Stomach (tissue), 19 donors: ENCODE measurements at regions of chr1 and their contacts with region 1.

Region 1: GRCh38 chr1:109564194-109564878 is 15.9 kb downstream of the GNAI3 start:
- DNase-seq: no peak
- H3K4me3 ChIP-seq: no peak overlapping the region
- H3K27ac ChIP-seq: no peak overlapping the region
- H3K4me1 ChIP-seq: peaks cover 25 to 95% (median 68%) of the 10 kb centered on the region in 4 donors
- H3K27me3 ChIP-seq: no peaks in the 10 kb centered on the region
- CTCF ChIP-seq: no peak
- EP300 ChIP-seq: no peak
- POLR2A ChIP-seq: no peak

Region 2: GRCh38 chr1:109718491-109718890 is 154.2 kb after region 1 on chr1:
- intact Hi-C with region 1: no loop called
- DNase-seq: peak in 1 of 2 donors; percentile 54
- H3K4me3 ChIP-seq: no peak overlapping the region
- H3K27ac ChIP-seq: no peak overlapping the region
- H3K4me1 ChIP-seq: peaks cover 0 to 18% (median 10%) of the 10 kb centered on the region in 4 donors
- H3K27me3 ChIP-seq: no peaks in the 10 kb centered on the region
- CTCF ChIP-seq: peak in 4 of 7 experiments; percentile 8 to 39 (median 16)
- EP300 ChIP-seq: no peak
- POLR2A ChIP-seq: no peak

Region 3: DNA sequence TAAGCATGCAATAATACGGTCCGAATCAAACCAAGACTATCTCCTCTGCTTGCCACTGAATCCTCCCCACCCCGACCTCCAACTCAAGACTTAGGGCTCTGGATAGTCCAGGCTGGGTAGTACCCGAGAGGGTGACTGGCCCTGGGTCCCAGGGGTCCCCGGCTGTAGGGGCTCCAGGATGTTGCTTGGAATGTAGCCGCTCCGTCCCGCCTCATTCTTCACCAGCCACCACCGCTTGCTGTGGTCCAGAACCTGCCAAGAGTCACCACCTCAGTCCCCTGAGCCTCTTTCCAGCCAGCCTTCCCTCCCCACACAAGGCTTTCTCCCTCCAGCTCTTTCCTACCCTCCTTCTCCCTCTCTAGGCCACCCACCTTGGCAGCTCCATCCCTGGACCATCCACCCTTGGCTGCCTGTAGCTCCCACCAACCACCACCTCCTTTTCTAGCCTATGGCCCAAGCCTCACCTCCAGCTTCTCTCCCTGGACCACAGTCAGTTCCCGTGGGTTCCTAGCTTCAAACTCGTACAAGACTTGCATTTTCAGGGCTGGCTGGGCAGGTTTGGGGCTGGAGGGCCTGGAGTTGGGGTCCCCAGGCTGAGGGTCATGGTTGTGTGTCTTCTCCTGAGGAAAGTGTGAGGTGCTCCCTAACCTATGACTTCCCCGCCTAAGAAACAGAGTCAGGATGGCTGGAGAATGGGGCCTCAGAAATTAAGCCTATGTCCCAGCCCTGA is 187.4 kb after region 1 on chr1:
- intact Hi-C with region 1: loop called (anchors 5 kb)
- DNase-seq: no peak
- H3K4me3 ChIP-seq: no peak overlapping the region
- H3K27ac ChIP-seq: no peak overlapping the region
- H3K4me1 ChIP-seq: no peaks in the 10 kb centered on the region
- H3K27me3 ChIP-seq: peaks cover 0 to 5% (median 0%) of the 10 kb centered on the region in 3 donors
- CTCF ChIP-seq: no peak
- EP300 ChIP-seq: no peak
- POLR2A ChIP-seq: no peak